B cell (primary cell): ENCODE measurements at regions of chr15 and their contacts with region 1.

Region 1: DNA sequence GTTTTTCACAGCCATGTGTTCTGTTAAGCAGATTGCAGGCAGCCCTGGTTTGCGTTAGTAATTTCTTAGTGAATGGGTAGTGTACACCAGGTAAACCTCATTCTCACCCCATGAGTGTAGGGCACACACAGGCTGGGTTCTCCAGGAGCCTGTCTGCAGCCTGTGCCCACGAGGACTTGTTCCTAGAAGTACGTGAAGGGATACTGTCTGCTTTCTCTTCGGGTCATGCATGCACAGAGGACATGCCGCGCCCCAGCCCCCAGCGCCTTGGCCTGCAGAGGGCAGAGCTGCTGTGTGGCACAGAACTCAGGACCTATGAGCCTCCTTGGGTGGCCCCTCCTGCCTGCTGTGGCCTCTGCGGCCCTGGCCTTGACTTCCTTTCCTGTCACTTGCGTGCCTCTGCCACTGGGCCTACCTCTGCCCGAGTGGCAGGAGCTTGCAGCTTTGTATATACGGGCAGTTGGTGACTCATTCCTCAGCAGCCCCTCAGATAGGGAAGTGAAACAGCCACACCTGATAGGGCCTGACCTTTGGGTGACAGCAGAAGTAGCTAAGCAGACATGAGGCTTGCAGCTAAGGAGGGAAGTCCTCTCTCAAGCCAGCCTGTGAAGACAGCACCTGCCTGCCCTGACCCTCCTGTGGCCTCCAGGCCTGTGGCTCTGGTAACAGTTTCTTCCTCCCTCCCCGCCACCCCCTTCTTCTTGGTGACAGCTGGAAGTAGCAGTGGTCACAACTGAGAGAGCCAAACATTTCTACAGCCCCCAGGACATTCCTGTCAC is 19.5 kb downstream of the PPCDC start:
- DNase-seq: peak; percentile 94
- ATAC-seq: peak; percentile 89
- H3K4me3 ChIP-seq: no peak overlapping the region
- H3K4me3 Mint-ChIP-seq: peak overlapping the region; percentile 25
- H3K27ac ChIP-seq: peak overlapping the region; percentile 76 to 80
- H3K27ac Mint-ChIP-seq: peak overlapping the region; percentile 89
- H3K4me1 ChIP-seq: peaks cover 48 to 65% of the 10 kb centered on the region in 2 donors
- H3K4me1 Mint-ChIP-seq: peaks cover 57% of the 10 kb centered on the region
- H3K27me3 ChIP-seq: no peaks in the 10 kb centered on the region
- H3K27me3 Mint-ChIP-seq: no peaks in the 10 kb centered on the region
- CTCF ChIP-seq: peak; percentile 61

Region 2: GRCh38 chr15:75008629-75009326 is 34.1 kb before region 1 on chr15:
- CTCF ChIA-PET with region 1: interaction called, 5 read pairs
- POLR2A ChIA-PET with region 1: interaction called, 3 read pairs
- intact Hi-C with region 1: loop called (anchors 1 kb)
- DNase-seq: peak; percentile 86
- ATAC-seq: peak; percentile 91
- H3K4me3 ChIP-seq: peak overlapping the region in 3 of 5 experiments; percentile 6 to 40 (median 13)
- H3K4me3 Mint-ChIP-seq: peak overlapping the region; percentile 75
- H3K27ac ChIP-seq: peak overlapping the region; percentile 40 to 54
- H3K27ac Mint-ChIP-seq: peak overlapping the region; percentile 92
- H3K4me1 ChIP-seq: peaks cover 38 to 44% of the 10 kb centered on the region in 2 donors
- H3K4me1 Mint-ChIP-seq: peaks cover 40% of the 10 kb centered on the region
- H3K27me3 ChIP-seq: peaks cover 0 to 61% (median 31%) of the 10 kb centered on the region in 4 experiments
- H3K27me3 Mint-ChIP-seq: peaks cover 30% of the 10 kb centered on the region
- CTCF ChIP-seq: no peak

Region 3: GRCh38 chr15:75029378-75030022 is 13.4 kb before region 1 on chr15:
- CTCF ChIA-PET with region 1: interaction called, 65 read pairs
- POLR2A ChIA-PET with region 1: interaction called, 5 read pairs
- intact Hi-C with region 1: no loop called
- DNase-seq: peak; percentile 90
- ATAC-seq: peak; percentile 98
- H3K4me3 ChIP-seq: peak overlapping the region in 1 of 5 experiments; percentile 9
- H3K4me3 Mint-ChIP-seq: no peak overlapping the region
- H3K27ac ChIP-seq: no peak overlapping the region
- H3K27ac Mint-ChIP-seq: no peak overlapping the region
- H3K4me1 ChIP-seq: peaks cover 12 to 25% of the 10 kb centered on the region in 2 donors
- H3K4me1 Mint-ChIP-seq: peaks cover 17% of the 10 kb centered on the region
- H3K27me3 ChIP-seq: peaks cover 0 to 8% (median 0%) of the 10 kb centered on the region in 4 experiments
- H3K27me3 Mint-ChIP-seq: no peaks in the 10 kb centered on the region
- CTCF ChIP-seq: peak; percentile 91

Region 4: DNA sequence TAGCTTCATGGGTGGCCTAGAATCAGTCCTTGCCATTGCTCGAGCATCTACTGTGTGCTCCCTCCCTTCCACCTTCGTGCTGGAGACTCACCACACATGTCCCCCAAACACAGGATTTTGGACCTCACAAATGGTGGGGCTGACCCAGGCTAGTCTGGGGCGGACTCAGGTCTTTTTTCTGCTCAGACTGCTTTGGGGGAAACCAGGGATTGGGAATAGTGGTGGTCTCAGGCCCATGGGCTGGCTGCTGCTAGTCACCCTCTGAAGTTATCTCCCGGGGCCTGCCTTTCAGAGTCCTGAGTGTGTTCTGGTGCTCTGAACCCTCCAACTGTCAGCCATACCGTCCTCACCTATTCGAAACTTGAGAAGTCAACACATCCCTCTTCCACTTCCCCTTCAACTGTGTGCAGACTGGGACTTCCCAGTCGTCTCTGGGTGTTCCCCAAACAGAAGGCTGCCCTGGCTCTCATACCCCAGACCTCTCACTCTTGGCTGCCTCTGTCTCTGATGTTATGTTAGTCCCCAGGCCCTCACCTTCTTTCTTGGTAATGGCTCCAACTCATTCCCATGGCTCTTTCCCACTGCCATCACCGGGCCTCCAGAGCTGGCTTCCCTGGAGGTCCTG is 26.5 kb after region 1 on chr15:
- CTCF ChIA-PET with region 1: interaction called, 24 read pairs
- POLR2A ChIA-PET with region 1: no interaction called
- intact Hi-C with region 1: loop called (anchors 1 kb)
- DNase-seq: peak; percentile 89
- ATAC-seq: peak; percentile 99
- H3K4me3 ChIP-seq: no peak overlapping the region
- H3K4me3 Mint-ChIP-seq: peak overlapping the region; percentile 48
- H3K27ac ChIP-seq: peak overlapping the region; percentile 72 to 78
- H3K27ac Mint-ChIP-seq: peak overlapping the region; percentile 81
- H3K4me1 ChIP-seq: peaks cover 23 to 45% of the 10 kb centered on the region in 2 donors
- H3K4me1 Mint-ChIP-seq: peaks cover 56% of the 10 kb centered on the region
- H3K27me3 ChIP-seq: no peaks in the 10 kb centered on the region
- H3K27me3 Mint-ChIP-seq: no peaks in the 10 kb centered on the region
- CTCF ChIP-seq: no peak

Region 5: GRCh38 chr15:75095594-75095993 is 52.7 kb after region 1 on chr15:
- CTCF ChIA-PET with region 1: interaction called, 9 read pairs
- POLR2A ChIA-PET with region 1: interaction called, 7 read pairs
- intact Hi-C with region 1: loop called (anchors 1 kb)
- DNase-seq: no peak
- ATAC-seq: no peak
- H3K4me3 ChIP-seq: no peak overlapping the region
- H3K4me3 Mint-ChIP-seq: peak overlapping the region; percentile 33
- H3K27ac ChIP-seq: no peak overlapping the region
- H3K27ac Mint-ChIP-seq: no peak overlapping the region
- H3K4me1 ChIP-seq: peaks cover 20% of the 10 kb centered on the region in 2 donors
- H3K4me1 Mint-ChIP-seq: peaks cover 29% of the 10 kb centered on the region
- H3K27me3 ChIP-seq: peaks cover 0 to 4% (median 0%) of the 10 kb centered on the region in 4 experiments
- H3K27me3 Mint-ChIP-seq: peaks cover 15% of the 10 kb centered on the region
- CTCF ChIP-seq: no peak

Region 6: GRCh38 chr15:75112278-75112847 is 69.4 kb after region 1 on chr15:
- CTCF ChIA-PET with region 1: interaction called, 45 read pairs
- POLR2A ChIA-PET with region 1: interaction called, 7 read pairs
- intact Hi-C with region 1: no loop called
- DNase-seq: no peak
- ATAC-seq: no peak
- H3K4me3 ChIP-seq: no peak overlapping the region
- H3K4me3 Mint-ChIP-seq: peak overlapping the region; percentile 50
- H3K27ac ChIP-seq: no peak overlapping the region
- H3K27ac Mint-ChIP-seq: peak overlapping the region; percentile 18
- H3K4me1 ChIP-seq: peaks cover 41 to 50% of the 10 kb centered on the region in 2 donors
- H3K4me1 Mint-ChIP-seq: peaks cover 54% of the 10 kb centered on the region
- H3K27me3 ChIP-seq: peaks cover 0 to 11% (median 4%) of the 10 kb centered on the region in 4 experiments
- H3K27me3 Mint-ChIP-seq: peaks cover 4% of the 10 kb centered on the region
- CTCF ChIP-seq: no peak

Region 7: DNA sequence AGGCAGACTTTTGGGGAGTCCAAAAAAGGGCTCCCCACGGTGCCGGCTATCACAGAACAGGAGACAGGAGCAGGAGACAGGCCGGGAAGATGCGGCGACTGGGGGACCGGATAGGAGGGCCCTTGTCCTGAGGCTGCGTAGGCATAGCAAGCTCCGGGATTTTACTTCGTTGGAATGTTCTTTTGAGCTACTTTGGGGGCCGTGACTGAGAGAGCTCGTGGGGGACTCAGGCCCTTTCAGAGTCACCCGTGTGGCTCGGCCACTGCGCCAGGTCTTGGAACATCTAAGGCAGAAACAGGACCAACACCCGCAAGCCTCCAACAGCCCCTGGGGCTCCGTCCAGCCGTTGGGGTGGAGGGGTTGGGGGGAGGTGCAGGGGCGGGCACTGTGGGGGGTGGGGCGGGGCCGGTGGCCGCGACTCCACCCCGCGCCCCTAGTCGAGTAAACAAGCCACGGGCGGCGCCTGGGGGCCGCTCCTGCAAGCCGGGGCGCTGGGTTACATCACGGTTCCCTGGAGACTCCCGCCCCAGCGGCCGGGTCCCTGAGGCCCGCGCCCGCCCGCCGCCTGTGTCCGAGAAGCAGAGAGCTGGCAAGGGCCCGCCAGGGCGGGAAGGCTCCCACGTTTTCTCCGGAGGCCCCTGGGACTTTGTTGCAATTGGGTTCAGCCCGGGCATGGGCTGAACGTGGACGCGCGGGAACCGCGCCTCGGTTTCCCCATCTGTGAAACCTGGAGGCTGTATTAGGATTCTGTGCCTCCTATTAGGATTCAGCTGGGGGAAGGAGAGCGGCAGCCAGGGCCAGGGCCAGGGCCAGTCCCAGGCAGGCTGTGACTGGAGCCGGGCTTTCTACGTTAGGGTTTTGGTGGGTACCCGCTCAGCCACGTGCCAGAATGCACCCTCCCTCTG is 135.5 kb after region 1 on chr15:
- CTCF ChIA-PET with region 1: interaction called, 12 read pairs
- POLR2A ChIA-PET with region 1: no interaction called
- intact Hi-C with region 1: no loop called
- DNase-seq: no peak
- ATAC-seq: peak; percentile 80
- H3K4me3 ChIP-seq: peak overlapping the region in 3 of 5 experiments; percentile 18 to 24 (median 21)
- H3K4me3 Mint-ChIP-seq: peak overlapping the region; percentile 46
- H3K27ac ChIP-seq: no peak overlapping the region
- H3K27ac Mint-ChIP-seq: no peak overlapping the region
- H3K4me1 ChIP-seq: peaks cover 9 to 15% of the 10 kb centered on the region in 2 donors
- H3K4me1 Mint-ChIP-seq: peaks cover 11% of the 10 kb centered on the region
- H3K27me3 ChIP-seq: peaks cover 0 to 41% (median 20%) of the 10 kb centered on the region in 4 experiments
- H3K27me3 Mint-ChIP-seq: peaks cover 47% of the 10 kb centered on the region
- CTCF ChIP-seq: no peak

Region 8: GRCh38 chr15:75342221-75342620 is 299.3 kb after region 1 on chr15:
- CTCF ChIA-PET with region 1: no interaction called
- POLR2A ChIA-PET with region 1: no interaction called
- intact Hi-C with region 1: no loop called
- DNase-seq: no peak
- ATAC-seq: no peak
- H3K4me3 ChIP-seq: no peak overlapping the region
- H3K4me3 Mint-ChIP-seq: no peak overlapping the region
- H3K27ac ChIP-seq: no peak overlapping the region
- H3K27ac Mint-ChIP-seq: no peak overlapping the region
- H3K4me1 ChIP-seq: peaks cover 5 to 9% of the 10 kb centered on the region in 2 donors
- H3K4me1 Mint-ChIP-seq: peaks cover 16% of the 10 kb centered on the region
- H3K27me3 ChIP-seq: no peaks in the 10 kb centered on the region
- H3K27me3 Mint-ChIP-seq: no peaks in the 10 kb centered on the region
- CTCF ChIP-seq: no peak

Region 9: DNA sequence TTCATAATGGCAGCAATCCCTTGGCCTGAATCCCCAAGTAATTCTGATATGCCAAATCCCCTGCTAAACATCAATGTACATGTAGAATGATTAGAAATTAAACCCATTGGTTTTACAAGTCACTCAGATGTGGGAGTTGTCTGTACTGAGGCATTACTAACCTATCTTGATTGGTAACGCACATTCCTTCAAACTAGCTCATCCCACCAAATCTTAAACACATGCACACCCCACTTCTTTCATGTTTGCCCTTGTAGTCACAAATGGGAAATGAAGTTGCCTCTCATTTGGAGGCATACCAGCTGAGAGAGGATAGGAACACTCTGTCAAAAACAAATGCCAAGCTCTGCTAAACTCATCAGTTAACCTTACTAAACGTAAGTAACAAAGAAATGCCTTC is 354.6 kb after region 1 on chr15:
- CTCF ChIA-PET with region 1: no interaction called
- POLR2A ChIA-PET with region 1: no interaction called
- intact Hi-C with region 1: no loop called
- DNase-seq: no peak
- ATAC-seq: no peak
- H3K4me3 ChIP-seq: no peak overlapping the region
- H3K4me3 Mint-ChIP-seq: no peak overlapping the region
- H3K27ac ChIP-seq: no peak overlapping the region
- H3K27ac Mint-ChIP-seq: no peak overlapping the region
- H3K4me1 ChIP-seq: no peaks in the 10 kb centered on the region
- H3K4me1 Mint-ChIP-seq: peaks cover 2% of the 10 kb centered on the region
- H3K27me3 ChIP-seq: no peaks in the 10 kb centered on the region
- H3K27me3 Mint-ChIP-seq: no peaks in the 10 kb centered on the region
- CTCF ChIP-seq: no peak